ENCODE measurements at regions of chr9 and their contacts with region 1.

Region 1: GRCh38 chr9:15231788-15232635 is 75.0 kb downstream of the TTC39B start:
- DNase-seq: peak; percentile 21
- H3K4me3 Mint-ChIP-seq: no peak overlapping the region
- H3K27ac Mint-ChIP-seq: no peak overlapping the region
- H3K4me1 Mint-ChIP-seq: peaks cover 5% of the 10 kb centered on the region
- H3K27me3 Mint-ChIP-seq: no peaks in the 10 kb centered on the region

Region 2: GRCh38 chr9:15220658-15221318 is 11.2 kb before region 1 on chr9:
- CTCF ChIA-PET with region 1: interaction called, 13 read pairs
- DNase-seq: no peak
- H3K4me3 Mint-ChIP-seq: no peak overlapping the region
- H3K27ac Mint-ChIP-seq: no peak overlapping the region
- H3K4me1 Mint-ChIP-seq: no peaks in the 10 kb centered on the region
- H3K27me3 Mint-ChIP-seq: no peaks in the 10 kb centered on the region